Left colon (tissue), 2 donors: ENCODE measurements at regions of chr11 and their contacts with region 1.

Region 1: GRCh38 chr11:118939953-118940598 is 14.3 kb upstream of the BCL9L start:
- DNase-seq: no peak
- ATAC-seq: no peak

Region 2: DNA sequence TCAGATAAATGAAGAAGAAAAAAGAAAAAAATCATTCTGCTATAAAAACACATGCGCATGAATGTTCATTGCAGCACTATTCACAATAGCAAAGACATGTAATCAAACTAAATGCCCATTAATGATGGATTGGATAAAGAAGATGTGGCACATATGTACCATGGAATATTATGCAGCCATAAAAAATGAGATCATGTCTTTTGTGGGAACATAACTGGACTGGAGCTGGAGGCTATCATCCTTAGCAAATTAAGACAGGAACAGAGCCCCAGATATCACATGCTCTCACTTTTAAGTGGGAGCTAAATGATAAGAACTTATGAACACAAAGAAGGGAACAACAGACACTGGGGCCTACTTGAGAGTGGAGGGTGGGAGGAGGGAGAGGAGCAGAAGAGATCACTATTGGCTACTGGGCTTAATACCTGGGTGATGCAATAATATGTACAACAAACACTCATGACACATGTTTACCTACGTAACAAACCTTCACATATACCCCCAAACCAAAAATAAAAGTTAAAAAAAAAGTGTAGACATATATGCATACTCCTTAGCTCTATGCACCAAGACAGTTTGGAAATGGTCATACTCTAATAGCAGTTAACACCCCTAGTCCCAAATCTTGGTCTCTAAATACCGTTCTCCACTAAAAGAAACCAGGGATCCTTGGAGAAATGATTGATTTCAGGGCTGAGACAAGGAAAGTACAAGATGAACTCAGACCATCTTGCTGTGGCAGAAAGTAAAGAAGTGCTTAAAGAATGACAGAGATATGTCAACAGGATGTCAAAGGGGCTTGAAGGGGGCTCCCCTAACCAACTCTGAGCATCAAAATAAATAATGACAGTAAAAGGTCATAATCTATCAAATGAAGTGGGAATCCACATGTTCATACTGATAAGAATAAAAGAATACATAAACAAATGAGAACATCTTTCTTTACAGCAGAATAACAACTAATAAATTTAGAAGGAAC is 132.0 kb before region 1 on chr11:
- intact Hi-C with region 1: no loop called
- DNase-seq: no peak
- ATAC-seq: no peak

Region 3: GRCh38 chr11:118901494-118902335 is 38.4 kb before region 1 on chr11:
- intact Hi-C with region 1: loop called in 1 of 2 experiments (anchors 5 kb)
- DNase-seq: no peak
- ATAC-seq: peak; percentile 11

Region 4: DNA sequence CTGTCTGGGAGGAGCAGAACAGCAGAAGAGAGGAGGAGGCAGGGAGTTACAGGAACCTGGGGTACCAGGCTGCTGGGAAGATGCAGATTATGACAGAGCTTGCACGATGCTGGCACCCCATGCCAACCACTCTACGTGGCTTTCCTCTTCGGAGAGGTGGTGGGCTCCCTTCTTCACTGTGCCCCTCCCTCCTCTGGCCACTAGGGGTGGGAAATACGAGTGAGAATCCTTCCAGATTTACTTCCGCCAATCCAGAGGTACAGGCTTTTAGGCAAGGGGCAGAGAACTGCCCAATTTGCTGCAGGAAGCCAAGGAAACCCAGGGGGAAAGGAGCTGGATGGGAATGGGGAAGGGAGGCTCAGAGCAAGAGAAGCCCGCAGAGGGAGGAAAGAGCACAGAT is 104.6 kb after region 1 on chr11:
- intact Hi-C with region 1: no loop called
- DNase-seq: no peak
- ATAC-seq: no peak